WTC11 (cell line): ENCODE measurements at regions of chr12 and their contacts with region 1.

Region 1: GRCh38 chr12:57182921-57183790 is 33.4 kb upstream of the NXPH4 start:
- DNase-seq: peak; percentile 90
- ATAC-seq: peak; percentile 96
- H3K4me3 Mint-ChIP-seq: no peak overlapping the region
- H3K27ac Mint-ChIP-seq: peak overlapping the region; percentile 99
- H3K4me1 Mint-ChIP-seq: peaks cover 4% of the 10 kb centered on the region
- H3K27me3 Mint-ChIP-seq: no peaks in the 10 kb centered on the region
- CTCF ChIP-seq: peak; percentile 81; the same call in 1 of the 2 replicates

Region 2: GRCh38 chr12:57135527-57136326 is 47.4 kb before region 1 on chr12:
- CTCF ChIA-PET with region 1: interaction called, 10 read pairs
- POLR2A ChIA-PET with region 1: no interaction called
- DNase-seq: peak; percentile 54
- ATAC-seq: peak; percentile 55
- H3K4me3 Mint-ChIP-seq: peak overlapping the region; percentile 40
- H3K27ac Mint-ChIP-seq: peak overlapping the region; percentile 96
- H3K4me1 Mint-ChIP-seq: peaks cover 57% of the 10 kb centered on the region
- H3K27me3 Mint-ChIP-seq: no peaks in the 10 kb centered on the region
- CTCF ChIP-seq: no peak

Region 3: DNA sequence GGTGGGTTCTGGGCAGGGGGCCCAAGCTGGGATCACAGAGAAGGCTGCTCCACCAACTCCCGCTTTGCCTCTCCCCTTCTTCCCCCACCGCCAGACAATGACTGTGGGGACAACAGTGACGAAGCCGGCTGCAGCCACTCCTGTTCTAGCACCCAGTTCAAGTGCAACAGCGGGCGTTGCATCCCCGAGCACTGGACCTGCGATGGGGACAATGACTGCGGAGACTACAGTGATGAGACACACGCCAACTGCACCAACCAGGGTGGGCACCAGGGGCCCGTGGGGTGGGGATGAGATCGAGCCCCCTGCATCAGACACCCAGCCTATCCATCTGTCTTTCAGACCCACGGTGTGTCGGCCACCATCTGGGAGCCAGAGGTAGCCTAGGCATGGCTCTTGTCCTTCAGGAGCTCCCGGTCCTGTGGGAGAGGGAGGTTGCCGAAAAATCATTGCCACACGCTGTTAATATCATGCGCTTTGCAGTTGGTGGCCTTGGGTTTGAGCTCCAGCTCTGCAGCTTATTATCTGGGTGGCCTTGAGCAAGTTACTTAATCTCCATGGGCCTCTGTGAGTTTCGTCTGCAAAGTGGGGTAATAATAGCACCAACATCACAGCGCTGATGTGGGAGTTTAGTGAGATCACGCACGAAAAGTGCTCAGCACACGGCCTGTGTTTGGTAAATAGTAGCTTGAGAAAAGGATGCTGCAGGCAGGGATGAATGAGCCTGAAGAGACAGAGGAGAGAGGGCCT is 13.9 kb before region 1 on chr12:
- CTCF ChIA-PET with region 1: interaction called, 25 read pairs
- POLR2A ChIA-PET with region 1: interaction called, 3 read pairs
- DNase-seq: no peak
- ATAC-seq: no peak
- H3K4me3 Mint-ChIP-seq: no peak overlapping the region
- H3K27ac Mint-ChIP-seq: no peak overlapping the region
- H3K4me1 Mint-ChIP-seq: no peaks in the 10 kb centered on the region
- H3K27me3 Mint-ChIP-seq: no peaks in the 10 kb centered on the region
- CTCF ChIP-seq: no peak